ENCODE measurements at regions of chr1 and their contacts with region 1.

Region 1: GRCh38 chr1:92960395-92961130 is 699 bp downstream of the DIPK1A start:
- DNase-seq: peak; percentile 79
- H3K4me3 Mint-ChIP-seq: peak overlapping the region; percentile 82
- H3K27ac Mint-ChIP-seq: peak overlapping the region; percentile 99
- H3K4me1 Mint-ChIP-seq: peaks cover 38% of the 10 kb centered on the region
- H3K27me3 Mint-ChIP-seq: no peaks in the 10 kb centered on the region

Region 2: GRCh38 chr1:92638498-92638897 is 322.1 kb before region 1 on chr1:
- CTCF ChIA-PET with region 1: no interaction called
- POLR2A ChIA-PET with region 1: no interaction called
- DNase-seq: no peak
- H3K4me3 Mint-ChIP-seq: no peak overlapping the region
- H3K27ac Mint-ChIP-seq: no peak overlapping the region
- H3K4me1 Mint-ChIP-seq: no peaks in the 10 kb centered on the region
- H3K27me3 Mint-ChIP-seq: peaks cover 11% of the 10 kb centered on the region

Region 3: GRCh38 chr1:92831762-92832536 is 128.6 kb before region 1 on chr1 and contains the start of gene RPL5:
- CTCF ChIA-PET with region 1: interaction called, 12 read pairs
- POLR2A ChIA-PET with region 1: no interaction called
- DNase-seq: peak; percentile 98
- H3K4me3 Mint-ChIP-seq: peak within 1 kb of the TSS; percentile 99
- H3K27ac Mint-ChIP-seq: peak within 1 kb of the TSS; percentile 97
- H3K4me1 Mint-ChIP-seq: peaks cover 45% of the 10 kb centered on the region
- H3K27me3 Mint-ChIP-seq: no peaks in the 10 kb centered on the region
- total RNA-seq, gene RPL5: 721 to 748 TPM

Region 4: DNA sequence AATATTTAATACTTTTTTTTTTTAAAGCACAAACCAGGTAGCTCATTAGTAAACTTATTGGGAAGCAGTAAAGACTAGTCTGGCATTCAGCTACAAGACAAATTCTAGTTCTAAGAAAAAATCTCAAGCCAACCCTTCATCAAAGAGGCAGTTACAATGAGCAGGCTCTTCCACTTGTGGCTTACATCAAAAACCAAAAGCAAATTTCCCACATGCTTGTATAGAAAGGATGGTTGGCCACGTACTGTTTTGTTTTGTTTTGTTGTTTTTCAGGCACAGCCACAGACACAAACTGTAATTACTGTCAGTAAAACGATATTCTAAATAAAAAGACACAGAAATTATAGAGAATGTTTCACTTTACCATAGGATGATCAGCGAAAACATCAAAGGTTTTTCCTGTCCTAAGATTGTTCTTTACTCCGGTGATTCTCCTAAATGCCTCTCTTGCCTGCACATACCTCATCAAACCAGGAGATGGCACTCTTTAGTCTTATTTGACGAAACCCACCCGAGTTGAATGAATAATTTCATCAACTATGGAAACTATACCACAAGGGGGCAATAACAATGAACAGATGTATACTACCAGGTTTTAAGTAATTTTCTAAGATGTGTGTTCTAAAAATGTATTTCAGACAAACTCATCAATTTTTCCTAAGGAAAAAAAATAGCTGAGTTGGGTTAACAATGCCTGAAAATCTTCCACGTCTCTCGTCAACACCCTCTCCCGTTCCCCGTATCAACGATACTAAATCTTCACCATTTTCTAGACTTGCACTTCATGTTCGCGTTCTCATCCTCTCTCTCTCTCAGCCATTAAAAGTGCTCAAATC is 101.8 kb before region 1 on chr1:
- CTCF ChIA-PET with region 1: interaction called, 31 read pairs
- POLR2A ChIA-PET with region 1: no interaction called
- DNase-seq: peak; percentile 71
- H3K4me3 Mint-ChIP-seq: peak overlapping the region; percentile 33
- H3K27ac Mint-ChIP-seq: peak overlapping the region; percentile 21
- H3K4me1 Mint-ChIP-seq: peaks cover 38% of the 10 kb centered on the region
- H3K27me3 Mint-ChIP-seq: no peaks in the 10 kb centered on the region

Region 5: DNA sequence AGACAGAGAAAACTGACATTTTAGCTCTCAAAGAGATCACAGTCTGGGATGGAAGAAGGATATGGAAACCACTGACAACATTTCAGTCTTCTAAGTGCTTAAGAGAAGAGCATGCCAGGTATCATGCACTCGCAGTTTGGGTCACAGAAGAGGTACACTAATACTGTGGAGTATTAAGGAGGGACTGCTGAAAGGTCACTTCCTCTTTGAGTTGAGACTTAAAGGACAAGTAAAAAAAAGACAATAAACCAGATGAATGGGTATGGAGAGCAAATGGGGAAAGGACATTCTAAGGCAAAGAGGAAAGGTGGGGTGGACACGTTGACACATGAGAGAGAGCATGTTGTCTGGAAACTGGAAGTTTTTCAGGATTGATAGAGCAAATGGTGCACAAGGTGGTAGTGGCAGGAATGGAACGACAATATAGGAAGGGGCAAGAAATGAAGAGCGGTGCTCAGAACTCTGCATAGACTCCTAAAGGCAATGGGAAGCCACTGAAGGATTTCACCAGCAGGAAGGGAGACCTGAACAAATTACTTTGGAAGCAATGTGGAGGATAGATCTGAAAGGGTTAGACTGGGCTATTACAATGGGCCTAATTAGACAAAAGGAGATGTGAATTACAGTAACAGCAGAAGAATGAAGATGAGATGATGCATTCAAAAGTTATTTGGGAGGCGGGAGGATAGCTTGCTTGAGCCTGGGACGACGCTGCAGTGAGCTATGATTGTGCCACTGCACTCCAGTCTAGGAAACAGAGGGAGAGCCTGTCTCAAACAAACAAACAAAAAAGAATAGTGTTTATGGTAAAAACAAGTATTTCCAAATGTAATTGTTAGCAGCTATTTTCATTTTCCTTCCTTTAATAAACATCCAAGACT is 10.4 kb before region 1 on chr1:
- CTCF ChIA-PET with region 1: interaction called, 18 read pairs
- POLR2A ChIA-PET with region 1: no interaction called
- DNase-seq: no peak
- H3K4me3 Mint-ChIP-seq: no peak overlapping the region
- H3K27ac Mint-ChIP-seq: no peak overlapping the region
- H3K4me1 Mint-ChIP-seq: peaks cover 48% of the 10 kb centered on the region
- H3K27me3 Mint-ChIP-seq: no peaks in the 10 kb centered on the region

Region 6: DNA sequence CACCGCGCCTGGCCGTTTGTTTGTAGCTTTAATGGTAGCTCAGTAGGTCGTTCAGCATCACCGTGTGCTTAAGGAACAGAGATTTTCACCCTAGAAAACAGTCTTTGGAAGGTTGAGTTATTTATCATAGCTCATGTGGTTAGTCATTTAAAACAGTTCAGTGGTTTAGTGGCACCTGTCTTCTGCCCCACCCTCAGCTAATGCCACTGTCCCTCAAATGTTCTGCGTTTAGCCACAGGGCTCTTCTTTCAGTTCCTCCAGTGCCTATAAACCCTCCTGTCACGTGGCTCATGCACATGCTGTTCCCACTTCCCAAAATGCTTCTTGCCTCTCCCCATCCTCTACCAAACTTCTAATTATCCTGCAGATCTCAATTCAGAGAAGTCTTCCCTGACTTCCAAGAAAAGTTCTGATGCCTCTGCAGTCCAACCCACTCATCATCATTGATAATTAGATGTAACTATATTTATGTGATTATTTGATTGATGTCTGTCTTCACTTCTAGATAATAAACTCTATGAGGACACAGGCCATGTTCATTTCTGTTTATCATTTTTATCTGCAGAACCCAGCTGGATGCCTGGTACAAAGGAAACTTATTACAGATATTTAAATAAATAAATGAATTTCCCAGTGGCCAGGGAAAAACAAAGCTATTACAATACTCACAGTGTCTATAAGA is 15.1 kb after region 1 on chr1:
- CTCF ChIA-PET with region 1: interaction called, 47 read pairs
- POLR2A ChIA-PET with region 1: interaction called, 4 read pairs
- DNase-seq: no peak
- H3K4me3 Mint-ChIP-seq: no peak overlapping the region
- H3K27ac Mint-ChIP-seq: peak overlapping the region; percentile 32
- H3K4me1 Mint-ChIP-seq: peaks cover 61% of the 10 kb centered on the region
- H3K27me3 Mint-ChIP-seq: no peaks in the 10 kb centered on the region

Region 7: GRCh38 chr1:92980732-92981647 is 20.4 kb after region 1 on chr1:
- CTCF ChIA-PET with region 1: interaction called, 47 read pairs
- POLR2A ChIA-PET with region 1: interaction called, 3 read pairs
- DNase-seq: peak; percentile 78
- H3K4me3 Mint-ChIP-seq: peak overlapping the region; percentile 27
- H3K27ac Mint-ChIP-seq: peak overlapping the region; percentile 98
- H3K4me1 Mint-ChIP-seq: peaks cover 59% of the 10 kb centered on the region
- H3K27me3 Mint-ChIP-seq: no peaks in the 10 kb centered on the region

Region 8: GRCh38 chr1:92994105-92994712 is 33.6 kb after region 1 on chr1:
- CTCF ChIA-PET with region 1: interaction called, 42 read pairs
- POLR2A ChIA-PET with region 1: interaction called, 5 read pairs
- DNase-seq: peak; percentile 91
- H3K4me3 Mint-ChIP-seq: no peak overlapping the region
- H3K27ac Mint-ChIP-seq: peak overlapping the region; percentile 39
- H3K4me1 Mint-ChIP-seq: peaks cover 56% of the 10 kb centered on the region
- H3K27me3 Mint-ChIP-seq: no peaks in the 10 kb centered on the region

Region 9: DNA sequence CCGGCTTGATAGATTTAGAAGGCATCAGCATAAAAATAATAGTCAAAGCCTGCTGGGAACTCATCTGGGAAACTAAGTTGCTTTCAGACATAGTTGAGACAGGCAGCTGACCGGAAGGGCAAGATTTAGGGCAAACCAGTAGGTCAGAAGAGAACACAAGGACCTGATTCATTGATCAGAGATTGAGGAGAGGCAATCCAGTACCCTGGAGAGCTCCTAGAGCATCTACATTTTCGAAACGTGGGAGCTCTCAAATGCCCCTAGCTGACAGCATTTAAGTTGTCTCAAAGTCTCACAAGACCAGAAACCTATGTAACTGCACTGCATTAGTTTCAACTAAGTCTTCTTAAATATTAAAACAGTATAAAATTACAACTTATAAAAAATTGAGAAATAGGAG is 95.7 kb after region 1 on chr1:
- CTCF ChIA-PET with region 1: no interaction called
- POLR2A ChIA-PET with region 1: no interaction called
- DNase-seq: peak; percentile 50
- H3K4me3 Mint-ChIP-seq: no peak overlapping the region
- H3K27ac Mint-ChIP-seq: no peak overlapping the region
- H3K4me1 Mint-ChIP-seq: peaks cover 3% of the 10 kb centered on the region
- H3K27me3 Mint-ChIP-seq: peaks cover 27% of the 10 kb centered on the region

Measured in activated CD4-positive, alpha-beta T cell treated with anti-CD3 and anti-CD28 coated beads, Interleukin-2, amount 10 ng/mL, durations not matched to agents 7 days and 5 days (primary cell).